Sigmoid colon (tissue), 7 donors: ENCODE measurements at regions of chr2 and their contacts with region 1.

Region 1: DNA sequence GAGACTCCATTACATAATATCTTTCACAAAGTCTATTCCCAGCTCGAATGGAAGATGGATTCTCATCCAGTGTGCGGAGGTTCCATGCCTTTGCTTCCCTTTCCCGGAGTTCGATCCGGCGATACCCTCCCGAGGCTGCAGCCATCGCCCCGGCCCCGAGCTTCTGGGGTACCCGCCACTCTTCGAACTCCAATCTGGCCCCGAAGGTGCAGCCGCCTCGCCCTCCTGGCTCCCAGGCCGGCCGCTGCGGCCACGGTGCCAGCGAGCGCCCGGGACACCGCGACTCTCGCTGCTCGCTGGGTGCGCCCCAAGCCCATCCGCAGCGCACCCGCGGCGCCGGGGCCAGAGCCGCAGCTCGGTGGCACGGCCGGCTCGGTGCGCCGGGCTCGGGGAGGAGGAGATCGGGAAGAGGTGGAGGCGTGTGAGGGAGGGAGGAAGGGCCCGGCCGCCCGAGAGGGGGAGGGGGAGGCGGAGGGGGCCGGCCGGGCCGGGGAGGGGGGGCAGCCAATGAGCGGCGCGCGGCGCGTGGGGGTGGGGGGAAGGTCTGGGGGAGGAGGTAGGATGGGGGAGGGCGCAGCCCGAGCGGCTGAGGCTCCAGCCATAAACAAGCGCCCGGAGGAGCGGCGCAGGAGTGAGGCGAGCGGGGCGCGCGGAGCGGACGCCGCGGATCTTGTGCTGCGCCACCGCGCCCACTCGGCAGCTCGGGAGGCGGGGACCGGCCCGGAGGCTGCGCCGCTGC is at the start of gene CRIM1:
- DNase-seq: peak; percentile 96
- H3K4me3 ChIP-seq: peak within 1 kb of the TSS; percentile 81 to 91 (median 87)
- H3K27ac ChIP-seq: peak within 1 kb of the TSS; percentile 87 to 96 (median 92)
- H3K4me1 ChIP-seq: peaks cover 0 to 61% (median 26%) of the 10 kb centered on the region in 4 donors
- H3K27me3 ChIP-seq: no peaks in the 10 kb centered on the region
- CTCF ChIP-seq: no peak
- EP300 ChIP-seq: no peak
- POLR2A ChIP-seq: peak in 1 of 2 donors; percentile 35
- total RNA-seq, gene CRIM1: 55.6 to 148 (median 64.2) TPM

Region 2: DNA sequence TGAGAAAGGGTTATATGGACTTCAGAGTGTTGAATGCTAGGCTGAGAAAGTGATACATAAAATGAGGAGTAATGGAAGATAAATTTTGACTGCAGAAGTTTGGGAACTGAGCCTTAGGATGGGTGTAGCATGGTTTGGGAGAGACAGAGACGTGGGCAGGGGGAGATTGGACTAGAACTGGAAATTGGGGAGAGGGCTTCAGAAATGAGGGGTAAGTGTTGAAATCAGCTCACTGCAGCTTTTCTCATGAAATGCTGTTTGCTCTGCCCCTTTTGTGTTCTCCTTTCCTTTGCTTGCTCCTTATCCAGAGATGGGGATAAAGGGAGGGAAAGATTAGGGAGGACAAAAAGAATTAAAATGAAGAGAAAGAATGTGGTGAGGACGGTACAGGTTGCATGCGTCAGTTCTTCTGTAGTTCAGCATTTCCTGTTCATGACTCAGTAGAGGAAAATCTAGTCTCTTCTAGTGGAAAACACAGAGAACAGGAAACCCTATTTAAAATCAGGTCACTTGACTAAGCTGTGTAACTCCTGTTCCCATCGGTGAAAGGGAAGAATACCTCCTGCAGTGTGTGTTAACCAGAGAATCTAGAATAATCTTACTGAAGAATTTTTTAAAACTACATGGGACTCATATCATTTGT is 105.8 kb after region 1 on chr2:
- intact Hi-C with region 1: loop called (anchors 2 kb)
- DNase-seq: no peak
- H3K4me3 ChIP-seq: no peak overlapping the region
- H3K27ac ChIP-seq: peak overlapping the region; percentile 20 to 81 (median 74)
- H3K4me1 ChIP-seq: peaks cover 0 to 58% (median 50%) of the 10 kb centered on the region in 4 donors
- H3K27me3 ChIP-seq: no peaks in the 10 kb centered on the region
- CTCF ChIP-seq: no peak
- EP300 ChIP-seq: no peak
- POLR2A ChIP-seq: no peak

Region 3: GRCh38 chr2:36507408-36507812 is 152.1 kb after region 1 on chr2:
- intact Hi-C with region 1: loop called (anchors 2 kb)
- DNase-seq: no peak
- H3K4me3 ChIP-seq: no peak overlapping the region
- H3K27ac ChIP-seq: peak overlapping the region in 1 of 4 donors; percentile 16
- H3K4me1 ChIP-seq: no peaks in the 10 kb centered on the region
- H3K27me3 ChIP-seq: no peaks in the 10 kb centered on the region
- CTCF ChIP-seq: peak; percentile 50 to 67 (median 63)
- EP300 ChIP-seq: no peak
- POLR2A ChIP-seq: no peak

Region 4: GRCh38 chr2:36663851-36664695 is 308.8 kb after region 1 on chr2:
- intact Hi-C with region 1: loop called (anchors 1 kb)
- DNase-seq: no peak
- H3K4me3 ChIP-seq: no peak overlapping the region
- H3K27ac ChIP-seq: no peak overlapping the region
- H3K4me1 ChIP-seq: peaks cover 0 to 6% (median 5%) of the 10 kb centered on the region in 4 donors
- H3K27me3 ChIP-seq: no peaks in the 10 kb centered on the region
- CTCF ChIP-seq: peak; percentile 28 to 68 (median 60)
- EP300 ChIP-seq: no peak
- POLR2A ChIP-seq: no peak